Activated naive CD4-positive, alpha-beta T cell treated with anti-CD3 and anti-CD28 coated beads for 36 hours (primary cell): ENCODE measurements at regions of chr17 and their contacts with region 1.

Region 1: GRCh38 chr17:55770148-55770870 is 19.5 kb downstream of the PCTP start:
- DNase-seq: no peak
- H3K4me3 Mint-ChIP-seq: no peak overlapping the region
- H3K27ac Mint-ChIP-seq: no peak overlapping the region
- H3K4me1 Mint-ChIP-seq: no peaks in the 10 kb centered on the region
- H3K27me3 Mint-ChIP-seq: no peaks in the 10 kb centered on the region

Region 2: DNA sequence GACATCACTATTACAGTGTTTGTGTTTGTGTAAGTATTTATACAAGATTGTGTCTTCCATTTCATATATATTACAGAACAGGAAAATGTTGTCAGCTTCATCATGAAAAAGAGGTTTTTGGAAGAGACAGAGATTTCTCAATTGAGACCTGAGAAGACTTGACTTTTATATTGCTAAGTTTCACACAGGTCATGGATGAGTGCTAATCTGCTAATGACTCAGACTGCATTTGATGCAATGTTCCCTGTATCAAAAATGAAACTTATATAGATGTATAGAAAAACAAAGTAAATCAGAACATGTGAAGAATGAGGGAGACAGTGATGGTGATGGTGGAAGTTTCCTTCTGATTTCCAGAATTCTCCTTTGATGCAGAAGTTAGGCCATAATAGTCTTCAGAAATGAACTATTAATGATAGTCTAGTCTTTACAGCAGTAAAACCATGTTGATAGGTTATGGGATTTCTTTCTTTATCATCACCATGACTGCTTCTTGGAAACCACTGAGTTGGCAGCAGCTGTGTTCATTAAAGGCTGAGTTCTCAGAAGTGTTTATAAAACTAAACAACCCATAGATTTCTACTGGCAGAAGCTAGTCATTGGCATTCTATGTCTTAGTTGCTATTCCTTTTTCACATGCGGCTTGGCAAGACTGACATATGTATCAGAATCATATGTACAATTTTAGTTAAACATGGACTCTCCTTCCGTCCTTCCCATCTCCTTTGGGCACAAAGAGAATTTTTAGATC is 36.6 kb after region 1 on chr17:
- CTCF ChIA-PET with region 1: no interaction called
- intact Hi-C with region 1: no loop called
- DNase-seq: peak; percentile 53
- H3K4me3 Mint-ChIP-seq: no peak overlapping the region
- H3K27ac Mint-ChIP-seq: peak overlapping the region; percentile 75
- H3K4me1 Mint-ChIP-seq: peaks cover 10% of the 10 kb centered on the region
- H3K27me3 Mint-ChIP-seq: peaks cover 10% of the 10 kb centered on the region

Region 3: GRCh38 chr17:55825213-55825612 is 54.9 kb after region 1 on chr17:
- CTCF ChIA-PET with region 1: interaction called, 4 read pairs
- intact Hi-C with region 1: loop called (anchors 1 kb)
- DNase-seq: peak; percentile 18
- H3K4me3 Mint-ChIP-seq: no peak overlapping the region
- H3K27ac Mint-ChIP-seq: no peak overlapping the region
- H3K4me1 Mint-ChIP-seq: no peaks in the 10 kb centered on the region
- H3K27me3 Mint-ChIP-seq: peaks cover 8% of the 10 kb centered on the region

Region 4: DNA sequence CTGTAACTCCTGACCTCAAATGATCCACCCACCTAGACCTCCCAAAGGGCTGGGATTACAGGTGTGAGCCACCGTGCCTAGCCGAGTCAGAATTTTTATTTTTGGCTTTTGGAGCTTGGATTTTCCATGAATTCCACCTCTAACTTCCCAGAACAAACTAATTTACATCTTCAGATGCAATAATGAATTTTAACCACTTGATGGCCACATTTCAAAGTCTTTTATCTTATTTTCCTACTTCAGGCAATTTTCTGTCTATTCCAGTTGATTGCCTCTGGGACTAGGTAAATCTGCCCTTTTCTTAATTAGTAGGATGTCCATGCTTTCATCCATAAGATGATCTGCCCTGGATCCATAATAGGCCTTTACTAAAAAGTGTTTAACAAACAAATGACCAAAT is 226.5 kb after region 1 on chr17:
- CTCF ChIA-PET with region 1: no interaction called
- intact Hi-C with region 1: no loop called
- DNase-seq: no peak
- H3K4me3 Mint-ChIP-seq: no peak overlapping the region
- H3K27ac Mint-ChIP-seq: no peak overlapping the region
- H3K4me1 Mint-ChIP-seq: peaks cover 2% of the 10 kb centered on the region
- H3K27me3 Mint-ChIP-seq: peaks cover 17% of the 10 kb centered on the region